ENCODE measurements at regions of chr22 and their contacts with region 1.

Region 1: GRCh38 chr22:35539910-35540594 is 579 bp upstream of the RASD2 start:
- DNase-seq: peak in 9 of 10 donors; percentile 43 to 94 (median 70)

Region 2: DNA sequence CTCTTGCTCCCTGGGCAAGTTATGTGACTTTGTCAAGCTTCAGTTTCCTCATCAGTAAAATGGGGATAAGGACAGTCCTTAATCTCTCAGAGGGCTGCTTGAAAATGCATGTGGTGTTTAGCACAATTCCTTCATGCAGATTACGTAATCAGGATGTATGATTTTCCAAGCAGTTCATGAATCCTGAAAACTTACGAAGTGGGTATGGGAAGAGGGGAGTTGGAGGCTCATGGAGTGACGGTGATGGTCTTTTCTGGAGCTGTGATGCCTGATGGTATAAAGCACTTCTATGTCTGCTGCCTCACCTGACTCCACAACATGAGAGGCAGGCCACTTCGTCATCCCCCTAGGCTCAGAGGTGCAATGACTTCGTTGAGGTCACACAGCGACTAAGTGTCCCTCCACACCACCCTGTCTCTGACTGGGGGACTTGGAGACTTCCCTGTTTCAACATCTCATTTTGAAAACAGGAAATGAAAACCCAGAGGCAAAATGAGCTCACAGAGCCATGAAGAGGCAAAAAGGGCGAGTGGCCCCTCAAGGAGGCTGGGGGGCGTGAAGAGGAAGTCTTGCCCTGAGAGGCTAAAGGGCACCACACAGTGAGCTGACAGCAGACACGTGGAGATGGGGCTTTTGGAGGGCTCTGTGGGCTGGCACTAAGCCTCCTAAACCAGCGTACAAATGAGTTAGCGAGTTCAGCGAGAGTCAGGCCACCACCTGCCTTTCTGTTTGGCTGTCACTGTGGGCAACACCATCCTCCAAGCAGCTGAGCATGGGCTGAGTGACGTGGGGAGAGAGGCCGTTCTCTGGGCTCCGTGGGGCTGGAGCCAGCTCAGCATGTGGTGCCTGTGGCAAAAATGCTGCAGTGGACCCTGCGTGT is 130.0 kb before region 1 on chr22:
- intact Hi-C with region 1: no loop called
- DNase-seq: peak in 5 of 10 donors; percentile 16 to 88 (median 18)

Region 3: DNA sequence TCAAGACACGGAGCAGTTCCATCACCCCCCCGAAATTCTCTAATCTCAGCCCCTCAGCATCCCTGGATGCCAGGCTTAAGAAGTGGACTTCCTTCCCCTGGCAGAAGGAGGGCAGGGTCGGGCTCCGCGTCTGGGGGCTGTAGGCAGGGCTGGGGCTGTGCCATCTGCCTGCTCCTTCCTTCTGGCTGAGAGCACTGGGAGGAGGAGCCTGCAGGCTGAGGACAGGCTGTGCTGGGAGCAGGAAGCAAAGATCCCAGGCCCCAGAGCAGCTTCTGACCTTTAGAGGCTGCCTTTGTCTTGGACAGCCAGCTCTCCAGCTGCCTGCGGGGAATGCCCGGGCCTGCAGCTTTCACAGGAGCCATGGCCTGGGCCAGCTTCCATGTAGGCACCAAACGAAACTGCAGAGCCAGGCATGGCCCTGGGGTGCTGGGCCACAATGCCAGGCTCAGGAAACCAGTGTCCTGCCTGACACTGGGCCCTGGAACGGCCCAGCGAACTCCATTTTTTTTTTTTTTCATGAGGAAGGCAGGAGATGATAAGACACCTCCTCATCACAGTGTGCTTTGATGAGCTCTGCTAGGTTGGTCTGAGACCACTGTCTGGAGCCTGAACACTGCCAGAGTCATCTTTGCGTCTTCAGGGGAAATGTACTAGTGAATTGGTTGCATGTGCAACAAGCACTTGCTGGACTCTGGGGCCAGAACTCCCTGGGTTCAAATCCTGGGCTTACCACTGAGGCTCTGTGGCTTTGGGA is 72.2 kb before region 1 on chr22:
- intact Hi-C with region 1: loop called (anchors 5 kb)
- DNase-seq: peak; percentile 46 to 96 (median 68)